ENCODE measurements at regions of chr4 and their contacts with region 1.

Region 1: DNA sequence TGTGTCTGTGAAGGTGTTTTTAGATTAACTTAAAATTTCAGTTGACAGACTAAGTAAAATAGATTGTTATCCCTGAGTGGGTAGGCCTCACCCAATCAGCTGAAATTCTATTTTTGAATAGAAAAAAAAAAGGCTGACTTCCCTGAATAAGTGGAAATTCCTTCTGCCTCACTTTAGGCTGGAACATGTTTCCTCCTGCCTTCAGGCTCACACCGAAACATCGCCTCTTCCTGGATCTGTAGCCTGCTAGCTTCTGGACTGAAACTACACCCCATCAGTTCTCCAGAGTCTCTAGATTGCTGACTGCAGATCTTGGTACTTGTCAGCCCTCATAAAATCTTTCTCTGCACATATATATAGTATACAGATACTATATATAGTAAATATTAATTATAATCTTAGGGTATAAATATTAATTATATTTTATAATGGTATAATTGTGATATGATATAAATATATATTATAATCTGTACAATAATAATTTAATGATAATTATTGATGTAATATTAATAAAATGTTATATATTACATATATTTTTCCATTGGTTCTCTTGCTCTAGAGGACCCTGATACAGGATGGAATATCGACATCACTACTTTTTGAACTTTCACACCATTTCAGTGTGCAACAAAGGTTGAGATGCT is 13.7 kb upstream of the SLIT2 start:
- DNase-seq: no peak
- ATAC-seq: no peak
- H3K4me3 Mint-ChIP-seq: no peak overlapping the region
- H3K27ac Mint-ChIP-seq: no peak overlapping the region
- H3K4me1 Mint-ChIP-seq: no peaks in the 10 kb centered on the region
- H3K27me3 Mint-ChIP-seq: no peaks in the 10 kb centered on the region
- CTCF ChIP-seq: no peak

Region 2: DNA sequence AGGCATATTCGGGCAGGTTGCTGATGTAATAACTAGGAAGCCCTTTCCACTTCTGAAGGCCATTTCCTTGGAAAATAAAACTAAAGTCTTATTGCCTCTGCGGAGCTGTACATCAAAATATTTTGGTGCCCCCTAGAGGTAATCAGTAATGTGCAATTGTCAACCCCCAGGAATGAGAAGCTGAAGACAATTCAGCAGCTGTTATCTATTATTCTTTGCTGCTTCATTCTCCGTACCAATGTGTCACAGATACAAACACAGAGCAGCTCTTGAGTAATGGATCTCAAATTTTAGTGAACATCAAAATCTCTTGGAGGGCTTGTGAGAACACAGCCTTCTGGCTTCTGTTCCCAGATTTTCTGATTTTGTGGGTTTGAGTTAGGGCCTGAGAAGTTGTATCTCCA is 10.1 kb after region 1 on chr4:
- CTCF ChIA-PET with region 1: interaction called, 12 read pairs
- POLR2A ChIA-PET with region 1: no interaction called
- intact Hi-C with region 1: no loop called
- DNase-seq: no peak
- ATAC-seq: no peak
- H3K4me3 Mint-ChIP-seq: no peak overlapping the region
- H3K27ac Mint-ChIP-seq: no peak overlapping the region
- H3K4me1 Mint-ChIP-seq: peaks cover 5% of the 10 kb centered on the region
- H3K27me3 Mint-ChIP-seq: peaks cover 24% of the 10 kb centered on the region
- CTCF ChIP-seq: peak; percentile 54

Measured in activated CD8-positive, alpha-beta T cell treated with anti-CD3 and anti-CD28 coated beads for 36 hours (primary cell).